Heart left ventricle (tissue), 16 donors: ENCODE measurements at regions of chr1 and their contacts with region 1.

Region 1: DNA sequence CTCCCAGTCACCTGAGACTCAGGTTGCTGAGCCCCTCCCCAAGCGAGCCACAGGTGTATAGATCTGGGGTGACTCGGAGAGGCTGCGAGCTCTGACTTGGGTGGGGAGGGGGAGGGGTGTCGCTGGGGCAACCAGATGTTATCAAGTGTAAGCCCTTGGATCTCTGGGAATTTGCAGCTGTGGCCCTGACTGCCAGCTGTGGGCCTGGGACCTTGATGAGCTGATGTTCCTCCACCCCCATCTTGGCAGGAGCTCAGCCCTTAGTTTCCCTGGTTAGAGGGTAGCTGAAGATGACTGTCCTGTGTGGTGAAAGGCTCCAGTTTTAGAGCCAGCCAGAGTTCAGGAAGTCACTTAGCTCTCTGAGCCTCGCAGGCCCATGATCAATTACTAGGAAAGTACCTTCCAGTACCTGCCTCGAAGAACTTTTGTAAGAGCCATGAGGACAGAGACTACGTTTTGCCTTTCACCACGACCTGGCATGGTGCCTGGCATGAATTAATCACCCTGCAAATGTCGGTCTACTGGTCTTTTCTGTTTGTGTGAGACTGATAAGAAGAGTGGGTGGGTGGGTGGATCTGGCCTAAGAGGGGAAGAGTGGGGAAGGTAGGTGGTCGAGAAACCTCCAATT is 55.8 kb downstream of the YARS1 start:
- DNase-seq: no peak
- ATAC-seq: peak in 2 of 4 donors; percentile 12 to 24
- H3K4me3 ChIP-seq: no peak overlapping the region
- H3K27ac ChIP-seq: no peak overlapping the region
- H3K4me1 ChIP-seq: peaks cover 0 to 20% (median 0%) of the 10 kb centered on the region in 12 donors
- H3K27me3 ChIP-seq: no peaks in the 10 kb centered on the region
- CTCF ChIP-seq: no peak
- POLR2A ChIP-seq: no peak

Region 2: DNA sequence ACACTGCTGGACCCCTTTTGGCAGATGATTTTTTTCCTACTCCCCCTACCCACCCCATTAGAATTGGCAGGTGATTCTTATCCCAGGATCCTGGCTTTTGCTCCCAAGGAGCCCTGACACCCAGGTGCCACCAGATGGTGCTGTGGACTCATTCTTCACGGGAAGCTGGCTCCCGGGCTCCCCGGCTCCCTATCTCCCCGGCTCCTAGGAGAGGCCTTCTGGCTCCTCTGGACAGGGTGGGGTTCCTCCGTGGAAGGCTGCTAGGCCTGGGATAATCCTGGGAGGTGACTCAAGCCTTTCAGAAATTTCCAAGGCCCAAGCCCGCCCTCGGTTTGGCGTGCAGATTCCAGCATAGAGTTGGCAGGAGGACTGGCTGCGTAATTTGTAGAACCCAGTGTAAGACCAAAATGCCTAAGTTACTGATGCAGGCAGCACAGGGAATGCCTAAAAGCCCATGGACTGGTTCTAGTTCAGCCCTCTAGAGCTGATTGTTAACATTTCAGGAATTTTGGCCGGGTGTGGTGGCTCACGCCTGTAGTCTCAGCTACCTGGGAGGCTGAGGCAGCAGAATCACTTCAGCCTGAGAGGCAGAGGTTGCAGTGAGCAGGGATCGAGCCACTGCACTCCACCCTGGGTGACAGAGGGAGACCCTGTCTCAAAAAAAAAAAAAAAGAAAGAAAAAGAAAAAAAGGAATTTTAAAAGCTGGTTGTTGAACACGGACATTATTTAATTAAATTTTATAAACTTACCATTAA is 360.3 kb before region 1 on chr1:
- intact Hi-C with region 1: loop called in 2 of 10 experiments (anchors 5 to 10 kb)
- DNase-seq: peak; percentile 82 to 92 (median 88)
- ATAC-seq: peak; percentile 93 to 99 (median 98)
- H3K4me3 ChIP-seq: no peak overlapping the region
- H3K27ac ChIP-seq: peak overlapping the region in 10 of 12 donors; percentile 2 to 67 (median 42)
- H3K4me1 ChIP-seq: peaks cover 0 to 12% (median 0%) of the 10 kb centered on the region in 12 donors
- H3K27me3 ChIP-seq: no peaks in the 10 kb centered on the region
- CTCF ChIP-seq: peak; percentile 82 to 96 (median 88)
- POLR2A ChIP-seq: peak in 1 of 2 donors; percentile 12

Region 3: DNA sequence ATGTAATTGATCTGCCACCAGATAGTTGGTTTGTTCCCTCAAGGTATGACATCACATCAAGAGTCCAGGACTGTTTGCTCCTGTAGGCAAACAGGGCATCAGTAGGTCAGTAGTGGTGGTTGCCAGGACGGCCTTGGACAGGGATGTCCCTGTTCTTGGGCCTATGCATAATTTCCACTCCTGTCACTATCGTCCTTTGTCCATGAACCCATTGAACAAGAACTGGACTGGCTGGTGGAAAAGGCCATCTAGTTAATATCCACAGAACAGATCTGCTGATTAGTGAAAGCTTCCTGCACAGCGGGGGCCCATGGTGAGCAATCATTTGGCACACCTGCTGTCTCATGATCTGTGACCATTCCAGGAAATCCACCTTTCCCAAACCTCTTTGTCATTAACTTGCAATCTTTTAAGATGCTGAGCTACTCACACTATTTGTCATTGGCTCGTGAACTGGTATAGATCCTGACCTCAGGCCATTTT is 354.7 kb before region 1 on chr1:
- intact Hi-C with region 1: loop called in 2 of 10 experiments (anchors 5 to 10 kb)
- DNase-seq: no peak
- ATAC-seq: no peak
- H3K4me3 ChIP-seq: no peak overlapping the region
- H3K27ac ChIP-seq: no peak overlapping the region
- H3K4me1 ChIP-seq: no peaks in the 10 kb centered on the region
- H3K27me3 ChIP-seq: no peaks in the 10 kb centered on the region
- CTCF ChIP-seq: no peak
- POLR2A ChIP-seq: no peak

Region 4: DNA sequence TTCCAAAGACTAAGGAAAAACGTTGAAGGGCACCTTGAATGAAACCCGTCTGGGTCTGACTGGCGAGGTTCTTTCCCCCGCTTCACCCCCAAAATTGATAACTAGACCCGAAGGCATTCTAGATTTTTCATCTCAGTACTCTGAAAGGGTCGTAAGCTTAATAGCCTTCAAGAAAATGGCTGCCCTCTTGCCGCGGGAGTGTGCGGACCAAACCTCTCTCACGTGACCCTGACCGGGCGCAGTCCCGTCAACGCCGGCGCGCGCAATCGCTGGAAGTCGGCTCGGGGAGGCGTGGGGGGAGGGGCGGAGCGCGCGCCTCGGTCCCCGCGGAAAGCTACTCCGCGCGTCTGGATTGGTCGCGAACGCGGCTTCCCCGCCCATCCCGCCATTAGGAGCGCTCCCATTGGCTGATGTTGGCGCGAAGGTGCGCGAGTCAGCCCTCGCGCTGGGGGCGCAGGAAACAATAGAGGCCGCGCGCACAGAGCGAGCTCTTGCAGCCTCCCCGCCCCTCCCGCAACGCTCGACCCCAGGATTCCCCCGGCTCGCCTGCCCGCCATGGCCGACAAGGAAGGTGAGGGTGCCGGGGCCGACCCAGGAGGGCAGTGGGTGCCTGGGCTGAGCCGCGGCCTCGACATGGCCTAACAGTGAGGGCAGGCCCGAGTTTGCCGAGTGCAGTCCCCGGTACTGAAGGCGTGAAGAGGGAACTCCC is 110.5 kb before region 1 on chr1 and contains the start of gene RBBP4:
- intact Hi-C with region 1: no loop called
- DNase-seq: peak; percentile 98 to 99 (median 99)
- ATAC-seq: peak; percentile 96 to 97 (median 96)
- H3K4me3 ChIP-seq: peak within 1 kb of the TSS; percentile 54 to 95 (median 72)
- H3K27ac ChIP-seq: peak within 1 kb of the TSS; percentile 95 to 100 (median 97)
- H3K4me1 ChIP-seq: peaks cover 2 to 57% (median 27%) of the 10 kb centered on the region in 12 donors
- H3K27me3 ChIP-seq: no peaks in the 10 kb centered on the region
- CTCF ChIP-seq: peak in 1 of 12 donors; percentile 6
- POLR2A ChIP-seq: peak; percentile 48 to 76
- total RNA-seq, gene RBBP4: 73.1 to 141 (median 101) TPM